ENCODE measurements at regions of chr6 and their contacts with region 1.

Region 1: GRCh38 chr6:131460614-131461000 is 112.4 kb upstream of the ARG1 start:
- DNase-seq: no peak
- ATAC-seq: no peak
- H3K4me3 Mint-ChIP-seq: no peak overlapping the region
- H3K27ac Mint-ChIP-seq: peak overlapping the region; percentile 11; the same call in 1 of the 2 replicates
- H3K4me1 Mint-ChIP-seq: peaks cover 16% of the 10 kb centered on the region
- H3K27me3 Mint-ChIP-seq: peaks cover 9% of the 10 kb centered on the region
- CTCF ChIP-seq: no peak

Region 2: GRCh38 chr6:131001111-131001736 is 459.4 kb before region 1 on chr6:
- CTCF ChIA-PET with region 1: no interaction called
- POLR2A ChIA-PET with region 1: no interaction called
- DNase-seq: no peak
- ATAC-seq: no peak; the same call in 1 of the 2 replicates
- H3K4me3 Mint-ChIP-seq: no peak overlapping the region
- H3K27ac Mint-ChIP-seq: peak overlapping the region; percentile 20
- H3K4me1 Mint-ChIP-seq: peaks cover 85% of the 10 kb centered on the region
- H3K27me3 Mint-ChIP-seq: no peaks in the 10 kb centered on the region
- CTCF ChIP-seq: no peak

Region 3: GRCh38 chr6:131199568-131200272 is 260.9 kb before region 1 on chr6:
- CTCF ChIA-PET with region 1: interaction called, 20 read pairs
- POLR2A ChIA-PET with region 1: no interaction called
- DNase-seq: peak; percentile 61
- ATAC-seq: peak; percentile 99
- H3K4me3 Mint-ChIP-seq: peak overlapping the region; percentile 8
- H3K27ac Mint-ChIP-seq: 0 out of 2 replicates have a peak overlapping the region, but pooled peaks have one; percentile 25
- H3K4me1 Mint-ChIP-seq: peaks cover 33% of the 10 kb centered on the region
- H3K27me3 Mint-ChIP-seq: no peaks in the 10 kb centered on the region; the same call in 1 of the 2 replicates
- CTCF ChIP-seq: peak; percentile 46

Region 4: GRCh38 chr6:131519670-131520436 is 59.2 kb after region 1 on chr6:
- CTCF ChIA-PET with region 1: interaction called, 13 read pairs
- POLR2A ChIA-PET with region 1: no interaction called
- DNase-seq: peak; percentile 59
- ATAC-seq: peak; percentile 98
- H3K4me3 Mint-ChIP-seq: no peak overlapping the region
- H3K27ac Mint-ChIP-seq: no peak overlapping the region
- H3K4me1 Mint-ChIP-seq: peaks cover 3% of the 10 kb centered on the region
- H3K27me3 Mint-ChIP-seq: no peaks in the 10 kb centered on the region; the same call in none of the 2 replicates
- CTCF ChIP-seq: peak; percentile 26

Region 5: GRCh38 chr6:131532580-131533039 is 72.0 kb after region 1 on chr6:
- CTCF ChIA-PET with region 1: interaction called, 11 read pairs
- POLR2A ChIA-PET with region 1: no interaction called
- DNase-seq: no peak
- ATAC-seq: no peak
- H3K4me3 Mint-ChIP-seq: no peak overlapping the region
- H3K27ac Mint-ChIP-seq: no peak overlapping the region
- H3K4me1 Mint-ChIP-seq: peaks cover 20% of the 10 kb centered on the region
- H3K27me3 Mint-ChIP-seq: peaks cover 15% of the 10 kb centered on the region
- CTCF ChIP-seq: no peak